ENCODE measurements at regions of chr15 and their contacts with region 1.

Region 1: DNA sequence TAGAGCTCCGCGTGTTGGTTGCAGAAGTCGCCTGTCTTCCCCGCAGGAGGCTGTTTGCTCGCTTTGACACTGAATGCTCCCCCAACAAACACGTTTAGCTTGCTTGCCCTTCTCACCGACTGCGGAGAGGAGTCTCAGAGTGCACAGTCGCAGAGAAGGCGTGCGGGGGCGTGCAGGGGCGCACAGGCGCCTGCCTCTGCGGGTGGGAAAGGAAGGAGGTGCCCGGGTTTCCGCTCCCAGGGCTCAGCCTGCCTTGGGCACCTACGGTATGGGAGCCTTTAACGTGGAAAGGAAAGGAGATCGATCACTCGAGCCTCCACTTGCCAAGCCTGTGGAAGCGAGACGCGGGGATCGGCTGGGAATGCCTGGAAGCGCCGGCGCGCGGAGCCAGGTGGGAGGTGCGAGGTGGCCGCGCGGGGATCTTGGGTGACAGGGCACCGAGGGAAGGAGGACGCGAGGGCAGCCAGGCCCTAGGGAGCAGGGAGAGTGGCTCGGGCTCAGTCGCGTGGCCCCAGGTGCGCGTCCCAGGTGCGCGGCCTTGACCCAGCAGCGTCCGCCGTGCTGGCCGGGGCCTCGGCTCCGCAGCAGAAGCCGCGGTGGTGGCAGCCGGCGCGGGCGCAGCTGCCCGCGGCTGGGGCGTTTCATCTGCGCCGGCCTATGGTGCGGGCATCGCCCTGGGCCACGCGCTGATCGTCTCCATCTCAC is at the start of gene FAN1:
- DNase-seq: peak; percentile 83 to 92 (median 89)
- ATAC-seq: peak; percentile 97 to 100 (median 99)
- H3K4me3 ChIP-seq: peak within 1 kb of the TSS; percentile 57 to 94 (median 70)
- H3K27ac ChIP-seq: peak within 1 kb of the TSS; percentile 4 to 89 (median 78)
- H3K4me1 ChIP-seq: peaks cover 0 to 33% (median 14%) of the 10 kb centered on the region in 12 donors
- H3K27me3 ChIP-seq: no peaks in the 10 kb centered on the region
- CTCF ChIP-seq: peak in 2 of 12 donors; percentile 7 to 15
- POLR2A ChIP-seq: peak in 1 of 2 donors; percentile 55
- total RNA-seq, gene FAN1: 7.3 to 21.4 (median 17.5) TPM

Region 2: DNA sequence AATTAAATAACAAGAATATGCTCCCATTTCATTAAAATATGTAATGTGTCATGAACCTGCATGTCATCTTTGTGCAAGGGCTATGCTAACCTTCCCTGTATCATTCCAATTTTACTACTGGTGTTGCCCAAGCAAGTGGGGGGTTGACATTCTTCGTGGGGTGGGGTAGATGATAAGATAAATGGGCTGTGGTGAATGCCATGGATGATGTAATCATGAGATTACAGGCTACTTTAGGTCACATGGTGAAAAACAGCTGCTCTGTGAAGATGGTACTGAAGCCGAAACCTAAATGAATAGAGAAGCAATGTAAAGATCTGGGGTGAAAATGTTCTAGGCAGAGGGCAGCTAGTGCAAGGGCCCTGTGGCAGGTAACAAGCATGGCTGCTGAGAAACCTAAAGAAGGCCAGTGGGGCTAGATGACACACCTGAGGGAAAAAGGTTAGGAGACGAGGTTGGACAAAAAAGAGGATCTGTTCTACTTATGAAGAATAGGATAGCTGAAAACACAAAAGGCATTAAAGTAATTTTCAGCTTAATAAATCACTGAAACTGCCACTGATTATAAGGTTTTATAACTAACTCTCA is 52.7 kb after region 1 on chr15:
- intact Hi-C with region 1: loop called in 1 of 10 experiments (anchors 5 kb)
- DNase-seq: no peak
- ATAC-seq: no peak
- H3K4me3 ChIP-seq: no peak overlapping the region
- H3K27ac ChIP-seq: no peak overlapping the region
- H3K4me1 ChIP-seq: peaks cover 0 to 20% (median 12%) of the 10 kb centered on the region in 12 donors
- H3K27me3 ChIP-seq: no peaks in the 10 kb centered on the region
- CTCF ChIP-seq: no peak
- POLR2A ChIP-seq: no peak

Region 3: DNA sequence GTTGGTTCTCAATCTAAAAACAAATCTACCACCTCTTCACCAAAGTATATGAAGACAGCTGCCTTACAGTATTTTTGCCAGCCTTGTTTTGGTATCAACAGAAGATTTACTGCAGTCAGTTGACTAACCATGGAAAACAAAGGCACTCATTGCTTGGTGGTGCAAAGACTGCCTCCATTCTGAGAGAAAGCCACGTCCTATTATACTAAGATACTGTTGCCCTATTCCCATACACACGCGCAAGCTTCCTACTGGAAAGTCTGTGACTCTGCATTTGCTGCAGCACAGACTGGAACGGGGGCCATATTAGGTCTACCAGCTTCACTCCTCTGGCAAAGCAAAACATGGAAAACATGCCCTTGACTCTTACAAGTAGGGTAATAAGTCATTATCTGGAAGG is 69.7 kb after region 1 on chr15:
- intact Hi-C with region 1: loop called in 1 of 10 experiments (anchors 5 kb)
- DNase-seq: no peak
- ATAC-seq: no peak
- H3K4me3 ChIP-seq: no peak overlapping the region
- H3K27ac ChIP-seq: no peak overlapping the region
- H3K4me1 ChIP-seq: peaks cover 0 to 27% (median 10%) of the 10 kb centered on the region in 12 donors
- H3K27me3 ChIP-seq: no peaks in the 10 kb centered on the region
- CTCF ChIP-seq: no peak
- POLR2A ChIP-seq: no peak

Measured in heart left ventricle (tissue), 16 donors.